ENCODE measurements at regions of chr22 and their contacts with region 1.

Region 1: GRCh38 chr22:39532215-39533071 is at the start of gene RPS19BP1:
- DNase-seq: peak; percentile 92 to 100 (median 99)
- ATAC-seq: peak; percentile 89
- H3K4me3 ChIP-seq: peak within 1 kb of the TSS; percentile 92
- H3K4me3 Mint-ChIP-seq: peak within 1 kb of the TSS; percentile 92 to 98 (median 95)
- H3K27ac ChIP-seq: peak within 1 kb of the TSS; percentile 95
- H3K27ac Mint-ChIP-seq: peak within 1 kb of the TSS; percentile 85 to 98 (median 95)
- H3K4me1 ChIP-seq: peaks cover 39 to 53% of the 10 kb centered on the region in 2 donors
- H3K4me1 Mint-ChIP-seq: peaks cover 41 to 60% (median 52%) of the 10 kb centered on the region in 7 donors
- H3K27me3 ChIP-seq: no peaks in the 10 kb centered on the region
- H3K27me3 Mint-ChIP-seq: peaks cover 0 to 4% (median 0%) of the 10 kb centered on the region in 5 donors
- total RNA-seq, gene RPS19BP1: 35.2 to 67.4 (median 61.5) TPM

Region 2: GRCh38 chr22:39170825-39171622 is 361.4 kb before region 1 on chr22:
- CTCF ChIA-PET with region 1: interaction called, 10 read pairs
- POLR2A ChIA-PET with region 1: interaction called, 6 read pairs
- intact Hi-C with region 1: loop called in 1 of 2 experiments (anchors 1 kb)
- DNase-seq: peak; percentile 64 to 94 (median 85)
- ATAC-seq: peak; percentile 85
- H3K4me3 ChIP-seq: peak overlapping the region; percentile 36
- H3K4me3 Mint-ChIP-seq: peak overlapping the region; percentile 58 to 84 (median 76)
- H3K27ac ChIP-seq: peak overlapping the region; percentile 9
- H3K27ac Mint-ChIP-seq: peak overlapping the region; percentile 82 to 98 (median 93)
- H3K4me1 ChIP-seq: peaks cover 39 to 50% of the 10 kb centered on the region in 2 donors
- H3K4me1 Mint-ChIP-seq: peaks cover 21 to 54% (median 48%) of the 10 kb centered on the region in 7 donors
- H3K27me3 ChIP-seq: no peaks in the 10 kb centered on the region
- H3K27me3 Mint-ChIP-seq: peaks cover 0 to 11% (median 0%) of the 10 kb centered on the region in 5 donors

Region 3: DNA sequence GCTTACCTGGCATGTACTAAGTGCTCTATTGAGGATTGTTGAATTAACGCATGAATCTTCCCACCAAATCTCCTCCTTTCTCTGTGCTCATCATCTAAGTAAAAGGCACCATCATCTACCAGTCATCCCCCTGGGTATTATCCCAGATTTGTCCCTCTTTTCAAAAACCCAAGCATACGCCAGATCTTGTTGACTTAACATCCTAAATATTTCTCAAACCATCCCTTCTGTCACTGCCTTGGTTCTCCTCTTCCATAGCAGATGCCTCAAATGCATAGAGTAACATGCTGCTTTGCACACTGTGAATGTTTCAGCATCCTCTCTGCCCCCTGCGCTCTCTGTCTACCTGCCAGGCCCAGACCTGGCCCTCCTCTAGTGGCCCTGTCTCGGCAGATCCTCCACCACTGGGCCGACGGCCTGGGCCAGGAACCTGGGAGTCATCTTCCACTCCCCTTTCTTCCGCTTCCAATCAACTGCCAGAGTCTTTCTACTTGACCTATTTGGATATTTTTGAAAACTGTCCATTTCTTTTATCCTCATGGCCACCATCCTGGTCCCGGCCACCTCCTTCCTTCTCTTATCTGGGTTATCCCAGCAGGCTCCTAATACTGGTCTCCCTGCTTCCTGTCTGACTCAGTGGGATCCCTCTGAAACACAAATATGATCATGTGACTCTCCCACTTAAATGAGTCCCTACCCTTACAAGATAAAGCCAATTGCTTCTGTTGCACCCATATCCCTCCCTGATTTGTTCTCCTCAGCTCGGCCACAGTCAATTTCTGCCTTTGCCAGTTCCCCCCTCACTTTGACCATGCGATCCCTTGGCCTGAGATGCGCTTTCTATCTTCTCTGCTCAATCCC is 136.3 kb before region 1 on chr22:
- CTCF ChIA-PET with region 1: interaction called, 16 read pairs
- POLR2A ChIA-PET with region 1: interaction called, 7 read pairs
- intact Hi-C with region 1: loop called (anchors 1 kb)
- DNase-seq: no peak
- ATAC-seq: no peak
- H3K4me3 ChIP-seq: no peak overlapping the region
- H3K4me3 Mint-ChIP-seq: peak overlapping the region in 1 of 10 donors; percentile 34
- H3K27ac ChIP-seq: no peak overlapping the region
- H3K27ac Mint-ChIP-seq: peak overlapping the region in 2 of 9 donors; percentile 5 to 6
- H3K4me1 ChIP-seq: peaks cover 6 to 9% of the 10 kb centered on the region in 2 donors
- H3K4me1 Mint-ChIP-seq: peaks cover 5 to 19% (median 11%) of the 10 kb centered on the region in 7 donors
- H3K27me3 ChIP-seq: no peaks in the 10 kb centered on the region
- H3K27me3 Mint-ChIP-seq: peaks cover 0 to 2% (median 0%) of the 10 kb centered on the region in 5 donors

Region 4: GRCh38 chr22:39514373-39514973 is 18.0 kb before region 1 on chr22:
- CTCF ChIA-PET with region 1: interaction called, 50 read pairs
- POLR2A ChIA-PET with region 1: interaction called, 105 read pairs
- intact Hi-C with region 1: no loop called
- DNase-seq: peak in 6 of 9 donors; percentile 18 to 55 (median 52)
- ATAC-seq: peak; percentile 72
- H3K4me3 ChIP-seq: no peak overlapping the region
- H3K4me3 Mint-ChIP-seq: no peak overlapping the region
- H3K27ac ChIP-seq: no peak overlapping the region
- H3K27ac Mint-ChIP-seq: peak overlapping the region in 5 of 9 donors; percentile 12 to 59 (median 23)
- H3K4me1 ChIP-seq: peaks cover 0 to 9% of the 10 kb centered on the region in 2 donors
- H3K4me1 Mint-ChIP-seq: peaks cover 11 to 43% (median 22%) of the 10 kb centered on the region in 7 donors
- H3K27me3 ChIP-seq: no peaks in the 10 kb centered on the region
- H3K27me3 Mint-ChIP-seq: no peaks in the 10 kb centered on the region

Region 5: GRCh38 chr22:39685336-39686177 is 153.1 kb after region 1 on chr22:
- CTCF ChIA-PET with region 1: no interaction called
- POLR2A ChIA-PET with region 1: no interaction called
- intact Hi-C with region 1: no loop called
- DNase-seq: no peak
- ATAC-seq: no peak
- H3K4me3 ChIP-seq: no peak overlapping the region
- H3K4me3 Mint-ChIP-seq: peak overlapping the region in 1 of 10 donors; percentile 33
- H3K27ac ChIP-seq: no peak overlapping the region
- H3K27ac Mint-ChIP-seq: no peak overlapping the region
- H3K4me1 ChIP-seq: no peaks in the 10 kb centered on the region
- H3K4me1 Mint-ChIP-seq: peaks cover 0 to 12% (median 5%) of the 10 kb centered on the region in 7 donors
- H3K27me3 ChIP-seq: no peaks in the 10 kb centered on the region
- H3K27me3 Mint-ChIP-seq: peaks cover 0 to 44% (median 5%) of the 10 kb centered on the region in 5 donors

Region 6: DNA sequence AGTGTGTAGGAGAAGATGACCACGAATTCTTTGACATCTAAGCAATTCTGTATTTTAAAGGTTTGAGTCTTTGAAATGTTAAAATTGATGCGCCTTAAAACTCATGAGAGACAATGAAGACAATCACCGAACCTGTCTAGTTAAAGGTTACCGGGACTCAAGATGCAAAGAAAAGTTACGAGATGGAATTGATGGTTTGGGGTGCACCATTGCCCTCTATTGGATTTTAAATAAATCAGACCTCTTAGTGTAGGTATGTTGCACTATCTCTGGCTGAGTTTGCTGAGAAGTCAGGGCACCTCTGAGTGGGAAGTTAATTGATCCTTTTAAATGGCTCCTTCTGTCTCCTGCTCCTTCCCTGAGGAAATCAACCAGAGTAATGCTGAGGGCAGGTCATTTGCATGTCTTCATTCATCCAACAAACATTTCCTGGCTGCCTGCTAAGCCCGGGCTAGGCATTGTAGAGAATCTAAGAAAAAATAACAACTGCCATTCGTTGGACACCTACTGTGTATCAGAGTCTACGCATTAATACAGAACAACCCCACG is 408.4 kb after region 1 on chr22:
- CTCF ChIA-PET with region 1: interaction called, 5 read pairs
- POLR2A ChIA-PET with region 1: interaction called, 5 read pairs
- intact Hi-C with region 1: loop called in 1 of 2 experiments (anchors 2 kb)
- DNase-seq: peak in 7 of 9 donors; percentile 56 to 81 (median 75)
- ATAC-seq: peak; percentile 76
- H3K4me3 ChIP-seq: peak overlapping the region; percentile 32
- H3K4me3 Mint-ChIP-seq: peak overlapping the region; percentile 39 to 84 (median 70)
- H3K27ac ChIP-seq: peak overlapping the region; percentile 79
- H3K27ac Mint-ChIP-seq: peak overlapping the region in 5 of 9 donors; percentile 80 to 99 (median 98)
- H3K4me1 ChIP-seq: peaks cover 85 to 96% of the 10 kb centered on the region in 2 donors
- H3K4me1 Mint-ChIP-seq: peaks cover 70 to 97% (median 93%) of the 10 kb centered on the region in 7 donors
- H3K27me3 ChIP-seq: no peaks in the 10 kb centered on the region
- H3K27me3 Mint-ChIP-seq: no peaks in the 10 kb centered on the region

Region 7: DNA sequence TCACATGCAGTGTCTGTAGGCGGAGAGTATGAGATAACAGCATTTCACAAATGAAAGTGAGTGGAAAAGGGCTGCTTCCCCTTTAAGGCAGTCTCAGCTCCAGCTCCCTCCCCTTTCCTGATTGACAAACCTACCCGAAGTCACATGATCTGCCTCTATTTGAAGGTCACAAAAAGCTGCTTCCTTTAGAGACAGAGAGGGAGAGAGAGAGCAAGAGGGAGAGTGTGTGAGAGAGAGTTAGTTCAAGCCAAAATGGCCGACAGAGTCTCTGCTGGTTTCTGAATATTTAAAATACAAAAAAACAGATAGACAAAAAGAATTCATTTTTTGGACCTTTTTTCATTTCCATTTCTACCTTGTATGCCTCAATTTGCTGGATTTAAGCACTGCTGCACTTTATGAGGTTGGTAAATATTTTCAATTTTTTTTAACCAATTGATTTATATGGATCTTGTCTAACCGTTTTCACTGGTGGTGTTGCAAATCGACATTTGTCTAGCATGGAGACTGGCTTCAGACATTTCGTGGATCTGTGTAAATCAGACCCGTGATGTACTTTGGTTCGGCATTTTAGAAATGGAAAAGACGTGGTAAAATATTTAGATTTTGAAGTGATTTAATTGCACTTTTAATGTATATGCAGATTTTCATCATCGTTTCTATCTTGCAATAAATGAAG is 645.4 kb after region 1 on chr22 and contains the start of gene TNRC6B:
- CTCF ChIA-PET with region 1: no interaction called
- POLR2A ChIA-PET with region 1: no interaction called
- intact Hi-C with region 1: loop called (anchors 1 to 2 kb)
- DNase-seq: peak in 8 of 9 donors; percentile 68 to 95 (median 90)
- ATAC-seq: peak; percentile 98
- H3K4me3 ChIP-seq: peak within 1 kb of the TSS; percentile 72
- H3K4me3 Mint-ChIP-seq: peak within 1 kb of the TSS; percentile 80 to 97 (median 90)
- H3K27ac ChIP-seq: peak within 1 kb of the TSS; percentile 71
- H3K27ac Mint-ChIP-seq: peak within 1 kb of the TSS; percentile 85 to 94 (median 91)
- H3K4me1 ChIP-seq: peaks cover 35 to 44% of the 10 kb centered on the region in 2 donors
- H3K4me1 Mint-ChIP-seq: peaks cover 38 to 77% (median 63%) of the 10 kb centered on the region in 7 donors
- H3K27me3 ChIP-seq: no peaks in the 10 kb centered on the region
- H3K27me3 Mint-ChIP-seq: no peaks in the 10 kb centered on the region
- total RNA-seq, gene TNRC6B: 67.4 to 165 (median 146) TPM